Left ventricle myocardium superior (tissue), 1 donor: ENCODE measurements at regions of chr20 and their contacts with region 1.

Region 1: DNA sequence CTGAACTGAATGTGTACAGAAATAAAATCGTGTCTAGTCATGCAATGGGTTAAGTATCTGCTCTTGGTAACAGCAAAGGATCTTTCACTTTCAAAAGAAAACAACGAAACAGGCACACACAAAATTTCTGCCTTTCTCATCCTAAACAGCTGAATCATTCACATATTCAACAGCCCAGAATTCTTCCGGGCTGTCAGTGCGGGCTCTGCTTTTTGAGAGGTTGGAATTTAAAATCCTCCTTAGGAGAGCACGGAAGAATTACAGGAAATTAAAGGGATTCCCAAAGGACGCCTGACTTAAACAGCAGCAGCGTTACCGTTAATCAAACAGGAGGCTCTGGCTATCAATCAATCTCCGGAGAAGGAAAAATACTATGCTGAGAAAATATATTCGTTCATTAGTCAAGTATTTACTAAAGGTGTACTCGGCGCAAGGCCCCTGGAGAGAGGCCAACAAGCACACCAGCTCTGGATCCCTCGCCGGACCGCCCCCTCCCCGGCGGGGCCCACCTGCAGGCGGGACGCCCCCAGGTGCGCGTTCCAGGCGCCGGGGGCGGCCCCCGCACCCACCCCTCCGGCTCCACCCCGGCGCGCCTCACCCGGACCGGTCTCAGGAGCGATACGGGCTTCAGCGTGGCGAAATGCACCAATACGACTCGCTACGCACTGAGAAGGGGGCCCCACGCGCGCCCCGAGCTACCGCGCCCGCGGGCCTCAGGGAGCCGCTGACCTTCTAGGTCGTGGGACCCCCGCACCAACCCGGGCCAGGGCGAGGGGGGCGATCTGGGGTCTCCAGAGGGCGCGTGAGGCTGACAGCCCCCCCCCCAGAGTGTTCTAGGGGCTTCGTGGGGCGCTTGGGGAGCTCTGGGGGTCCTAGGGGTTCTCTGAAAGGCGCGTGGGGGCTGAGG is 1.0 kb downstream of the NAPB start:
- DNase-seq: peak; percentile 63
- ATAC-seq: peak; percentile 68

Region 2: DNA sequence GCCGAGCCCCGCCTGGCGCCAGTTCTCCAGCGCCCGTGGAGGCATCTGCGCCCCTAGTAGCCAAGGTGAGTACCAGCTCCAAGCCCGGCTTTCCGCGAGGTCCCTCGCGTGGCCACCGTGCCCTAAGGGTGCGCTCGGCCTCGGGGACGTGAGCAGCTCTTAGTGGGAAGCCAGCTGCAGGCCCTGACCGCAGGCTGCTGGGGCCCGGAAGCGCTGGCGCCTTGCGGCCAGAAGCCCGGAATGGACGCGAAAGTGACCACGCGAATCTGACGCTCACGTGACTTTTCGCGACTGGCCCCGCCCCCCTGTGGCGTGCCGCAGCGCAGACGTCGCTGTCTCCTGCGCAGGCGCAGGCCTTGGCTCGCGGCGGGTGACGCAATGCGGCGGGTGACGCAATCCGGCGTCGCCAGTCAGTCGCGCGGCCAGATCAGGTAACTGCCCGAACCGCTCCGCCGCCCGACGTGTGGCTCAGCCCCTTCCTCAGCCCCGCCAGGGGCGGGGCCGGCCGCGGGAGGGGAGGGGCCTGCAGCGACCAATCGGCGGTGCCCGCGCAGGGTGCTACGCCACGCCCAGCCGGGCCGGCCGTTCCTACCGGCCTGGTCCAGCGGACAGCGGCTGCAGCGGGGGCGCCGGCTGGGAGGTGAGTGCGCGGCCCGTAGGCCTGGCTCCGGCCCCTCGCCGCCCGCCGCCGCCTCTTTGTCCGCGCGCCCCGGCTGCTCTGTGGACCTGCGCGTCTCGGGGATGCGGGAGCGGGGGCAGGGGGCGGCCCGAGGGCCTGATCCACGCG is 58.5 kb before region 1 on chr20 and contains the start of gene GZF1:
- intact Hi-C with region 1: loop called (anchors 10 kb)
- DNase-seq: peak; percentile 99
- ATAC-seq: peak; percentile 89
- total RNA-seq, gene GZF1: 26.7 TPM